Sigmoid colon (tissue), 7 donors: ENCODE measurements at regions of chr5 and their contacts with region 1.

Region 1: DNA sequence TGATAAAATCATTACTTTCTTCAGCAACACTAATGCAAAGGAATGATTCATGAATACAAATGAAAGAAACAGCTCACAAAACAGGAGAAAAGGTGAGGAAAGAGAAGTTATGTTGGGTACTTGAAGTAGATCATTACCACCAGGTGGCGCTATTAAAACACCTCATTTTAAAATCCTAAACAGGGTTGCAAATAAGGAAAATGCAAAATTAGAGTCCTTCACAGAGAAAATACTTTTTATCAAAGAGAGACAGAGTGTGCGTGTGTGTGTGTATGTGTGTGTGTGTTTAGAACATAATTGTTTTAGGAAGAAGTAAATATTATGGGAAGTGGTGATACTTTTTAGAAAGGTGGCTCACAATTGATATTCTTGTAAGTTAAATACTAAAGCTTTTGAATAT is 49.5 kb upstream of the CD180 start:
- DNase-seq: no peak
- H3K4me3 ChIP-seq: no peak overlapping the region
- H3K27ac ChIP-seq: peak overlapping the region; percentile 51 to 72 (median 64)
- H3K4me1 ChIP-seq: peaks cover 0 to 79% (median 68%) of the 10 kb centered on the region in 4 donors
- H3K27me3 ChIP-seq: no peaks in the 10 kb centered on the region
- CTCF ChIP-seq: peak; percentile 69 to 88 (median 76)
- EP300 ChIP-seq: no peak
- POLR2A ChIP-seq: no peak

Region 2: DNA sequence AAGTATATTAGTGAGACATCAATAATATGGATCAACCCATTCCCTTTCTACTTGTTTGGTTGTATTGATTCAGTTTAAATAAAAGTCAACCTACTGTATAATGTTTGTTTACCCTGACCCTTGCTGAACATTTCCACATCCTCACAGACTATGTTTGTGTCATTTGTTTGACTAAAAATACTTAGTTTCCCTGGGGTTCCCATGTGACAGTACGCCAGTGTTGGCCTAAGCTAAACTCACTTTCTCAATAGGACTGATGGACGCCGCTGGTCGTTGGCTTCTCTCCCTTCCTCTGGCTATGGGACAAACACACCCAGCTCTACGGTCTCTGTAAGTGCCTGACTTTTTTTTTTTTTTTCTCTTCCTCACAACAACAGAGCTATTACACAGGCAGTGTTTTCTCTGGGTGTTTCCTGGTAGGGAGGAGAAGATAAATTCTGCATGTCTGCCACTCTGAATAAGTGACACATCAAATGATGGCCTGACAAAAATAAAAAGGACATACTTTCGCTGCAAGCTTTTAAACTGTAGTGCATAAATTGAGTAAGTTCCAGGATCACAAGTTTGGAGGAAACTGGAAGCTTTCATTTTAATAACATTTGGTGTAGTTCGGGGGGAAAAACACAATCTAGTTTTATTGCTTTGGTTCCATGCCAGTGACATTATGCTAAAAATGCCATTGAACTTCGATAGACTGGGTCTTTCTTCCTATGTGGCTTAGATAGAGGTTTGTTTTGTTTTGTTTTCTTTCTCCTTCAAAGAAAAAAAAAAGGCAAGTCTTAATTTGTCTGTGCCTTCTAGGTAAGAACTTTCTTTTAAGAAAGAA is 150.5 kb before region 1 on chr5:
- intact Hi-C with region 1: no loop called
- DNase-seq: peak; percentile 90
- H3K4me3 ChIP-seq: peak overlapping the region in 2 of 4 donors; percentile 11 to 23
- H3K27ac ChIP-seq: peak overlapping the region; percentile 51 to 67 (median 61)
- H3K4me1 ChIP-seq: peaks cover 0 to 61% (median 30%) of the 10 kb centered on the region in 4 donors
- H3K27me3 ChIP-seq: no peaks in the 10 kb centered on the region
- CTCF ChIP-seq: no peak
- EP300 ChIP-seq: no peak
- POLR2A ChIP-seq: no peak

Region 3: DNA sequence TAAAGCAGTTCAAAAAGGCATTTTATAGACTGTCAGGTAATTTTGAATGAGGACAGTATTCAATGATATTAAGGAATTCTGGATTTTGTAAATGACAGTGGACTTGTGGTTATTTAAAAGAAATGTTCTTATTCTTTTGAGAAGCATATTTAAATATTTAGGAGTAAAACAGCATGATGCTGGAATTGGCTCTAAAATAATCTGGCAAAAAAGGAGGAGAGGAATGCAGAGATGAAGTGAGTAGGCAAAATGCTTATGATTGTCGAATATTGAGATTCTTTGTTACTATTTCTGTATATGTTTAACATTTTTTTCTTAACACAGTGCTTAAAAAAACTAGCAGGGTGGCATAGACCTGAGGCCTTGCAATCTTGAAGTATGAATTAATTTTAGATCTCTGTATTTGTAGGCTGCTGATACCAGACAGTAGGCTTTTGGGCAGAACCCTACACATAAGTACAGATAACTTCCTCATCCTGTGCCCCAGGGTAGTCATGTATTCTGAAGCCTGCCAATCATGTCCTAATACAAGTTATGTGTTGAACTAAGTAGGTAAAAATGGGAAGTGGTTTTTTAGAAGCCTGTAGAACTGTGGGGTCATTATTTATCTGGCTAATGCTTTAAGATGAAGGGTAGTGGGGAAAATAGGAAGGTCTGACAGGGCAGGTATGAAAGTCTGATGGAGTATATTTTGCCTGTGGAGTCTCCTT is 58.9 kb before region 1 on chr5:
- intact Hi-C with region 1: no loop called
- DNase-seq: no peak
- H3K4me3 ChIP-seq: no peak overlapping the region
- H3K27ac ChIP-seq: no peak overlapping the region
- H3K4me1 ChIP-seq: peaks cover 0 to 5% (median 0%) of the 10 kb centered on the region in 4 donors
- H3K27me3 ChIP-seq: no peaks in the 10 kb centered on the region
- CTCF ChIP-seq: no peak
- EP300 ChIP-seq: no peak
- POLR2A ChIP-seq: no peak

Region 4: DNA sequence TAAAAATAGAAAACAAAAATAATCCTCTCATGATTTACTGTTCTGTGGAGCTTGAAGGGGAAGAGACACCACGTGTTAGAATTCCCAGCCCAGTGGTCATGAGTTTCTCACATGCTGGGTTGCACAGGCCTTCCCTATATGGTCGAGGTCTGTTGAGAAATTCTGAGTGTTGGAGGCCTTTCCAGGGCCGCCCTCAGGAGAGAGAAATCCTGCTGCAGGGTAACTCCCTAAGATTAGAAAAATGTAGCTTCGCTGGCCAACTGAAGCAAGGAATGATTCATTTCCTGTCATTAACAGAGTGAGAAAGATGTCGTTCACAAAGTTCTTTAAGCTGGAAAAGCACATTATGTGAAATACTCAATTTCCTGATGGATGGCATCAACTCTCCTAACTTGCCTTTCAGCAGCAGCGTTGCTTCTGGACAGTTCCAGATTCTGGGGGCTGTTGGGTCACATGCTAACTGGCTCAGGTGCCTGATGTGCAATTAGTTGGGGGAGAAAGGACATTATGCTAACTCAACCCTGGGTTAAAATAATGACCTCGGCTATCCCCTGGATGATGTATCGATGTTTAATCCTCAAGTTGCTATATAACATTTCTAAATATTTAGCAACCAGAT is 55.3 kb after region 1 on chr5:
- intact Hi-C with region 1: loop called (anchors 2 kb)
- DNase-seq: peak; percentile 92
- H3K4me3 ChIP-seq: no peak overlapping the region
- H3K27ac ChIP-seq: peak overlapping the region; percentile 45 to 78 (median 62)
- H3K4me1 ChIP-seq: peaks cover 0 to 59% (median 36%) of the 10 kb centered on the region in 4 donors
- H3K27me3 ChIP-seq: no peaks in the 10 kb centered on the region
- CTCF ChIP-seq: no peak
- EP300 ChIP-seq: peak in 2 of 4 donors; percentile 18 to 74
- POLR2A ChIP-seq: no peak

Region 5: DNA sequence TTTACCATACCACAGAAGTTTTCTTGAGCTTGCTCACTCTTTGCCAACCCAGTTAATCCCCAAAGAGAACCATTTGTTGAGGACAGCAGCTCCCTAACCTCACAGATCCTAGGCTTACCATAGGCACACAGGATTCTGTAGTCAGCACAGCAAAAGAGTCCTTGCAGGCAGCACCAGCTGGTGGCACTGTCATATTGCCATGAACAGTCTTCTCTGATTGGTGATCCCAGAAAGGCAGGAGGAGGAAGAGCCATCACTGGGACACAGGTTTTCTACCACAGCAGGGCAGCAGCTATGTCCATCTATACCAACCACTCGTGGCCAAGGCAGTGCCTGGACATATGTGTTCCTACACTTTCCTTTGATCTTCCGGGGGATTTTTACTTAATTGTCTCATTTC is 247.6 kb after region 1 on chr5:
- intact Hi-C with region 1: loop called (anchors 10 kb)
- DNase-seq: no peak
- H3K4me3 ChIP-seq: no peak overlapping the region
- H3K27ac ChIP-seq: peak overlapping the region; percentile 50 to 79 (median 62)
- H3K4me1 ChIP-seq: peaks cover 0 to 47% (median 40%) of the 10 kb centered on the region in 4 donors
- H3K27me3 ChIP-seq: no peaks in the 10 kb centered on the region
- CTCF ChIP-seq: peak in 1 of 4 experiments; percentile 9
- EP300 ChIP-seq: no peak
- POLR2A ChIP-seq: no peak

Region 6: DNA sequence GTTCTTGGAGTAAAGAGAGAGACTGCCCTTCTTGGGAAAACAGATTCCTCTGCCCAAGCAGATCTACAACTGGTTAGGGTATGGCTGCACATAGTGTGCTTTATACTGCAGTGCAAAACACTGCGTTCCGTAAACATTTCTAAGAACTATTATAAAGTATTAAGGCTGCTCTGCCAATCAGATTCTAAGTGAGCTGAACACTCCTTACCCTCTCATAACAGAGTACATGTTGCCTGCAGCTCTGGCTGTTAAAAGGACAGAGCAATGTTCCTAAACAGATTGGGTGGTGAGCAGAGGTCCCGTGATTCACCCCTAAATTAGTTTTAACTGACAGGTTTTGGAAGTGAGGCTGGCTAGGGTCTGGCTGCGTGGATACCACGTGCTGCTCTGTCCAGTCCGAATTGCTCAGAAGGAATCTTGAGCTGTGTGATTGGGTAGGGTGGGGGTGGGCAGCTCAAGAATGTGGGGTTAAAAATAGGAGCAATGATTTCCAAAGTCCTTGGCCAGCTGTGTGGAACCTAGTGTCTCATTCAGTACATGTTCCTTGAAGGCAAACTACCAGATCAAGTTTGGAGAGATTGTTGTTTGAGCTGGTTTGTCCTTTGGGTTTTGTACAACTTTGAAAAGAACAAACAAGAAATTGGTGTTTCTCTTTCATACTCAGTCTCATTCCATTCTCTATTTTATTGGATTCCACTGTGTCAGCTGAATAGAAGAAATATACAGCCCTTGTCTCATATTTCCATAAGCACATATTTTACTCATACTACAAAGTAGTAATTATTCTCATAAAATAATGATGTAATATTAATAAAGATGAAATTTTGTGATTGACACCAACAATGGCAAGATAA is 448.1 kb after region 1 on chr5:
- intact Hi-C with region 1: loop called (anchors 5 kb)
- DNase-seq: peak; percentile 97
- H3K4me3 ChIP-seq: no peak overlapping the region
- H3K27ac ChIP-seq: peak overlapping the region; percentile 83 to 89 (median 86)
- H3K4me1 ChIP-seq: peaks cover 0 to 37% (median 29%) of the 10 kb centered on the region in 4 donors
- H3K27me3 ChIP-seq: no peaks in the 10 kb centered on the region
- CTCF ChIP-seq: no peak
- EP300 ChIP-seq: peak; percentile 90 to 100 (median 98)
- POLR2A ChIP-seq: no peak

Region 7: DNA sequence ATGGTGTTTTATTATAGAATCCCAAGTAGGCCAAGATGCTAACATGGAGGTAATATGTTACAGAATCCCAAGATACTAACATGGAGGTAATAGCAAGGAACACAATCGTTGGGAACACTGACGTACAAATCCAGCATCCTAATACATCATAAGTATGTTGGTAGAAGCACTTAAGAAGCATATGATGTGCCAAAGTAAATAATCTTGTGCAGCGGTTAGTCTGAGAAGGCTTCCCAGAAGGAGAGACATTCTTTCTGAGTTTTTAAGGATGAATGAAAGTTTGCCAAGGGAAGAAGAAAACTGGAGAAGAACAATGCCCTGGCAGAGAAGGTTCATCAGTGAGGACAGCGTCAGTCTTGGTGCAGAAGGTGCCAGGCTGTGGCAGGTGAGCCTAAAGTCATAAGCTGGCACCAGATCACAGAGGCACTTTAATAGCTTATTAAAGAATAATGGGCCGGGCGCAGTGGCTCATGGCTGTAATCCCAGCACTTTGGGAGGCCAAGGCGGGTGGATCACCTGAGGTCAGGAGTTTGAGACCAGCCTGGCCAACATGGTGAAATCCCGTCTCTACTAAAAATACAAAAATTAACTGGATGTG is 675.0 kb after region 1 on chr5:
- intact Hi-C with region 1: loop called (anchors 10 kb)
- DNase-seq: peak; percentile 77
- H3K4me3 ChIP-seq: no peak overlapping the region
- H3K27ac ChIP-seq: peak overlapping the region in 3 of 4 donors; percentile 41 to 69 (median 50)
- H3K4me1 ChIP-seq: peaks cover 0 to 4% (median 0%) of the 10 kb centered on the region in 4 donors
- H3K27me3 ChIP-seq: no peaks in the 10 kb centered on the region
- CTCF ChIP-seq: no peak
- EP300 ChIP-seq: peak; percentile 52 to 95 (median 75)
- POLR2A ChIP-seq: no peak

Region 8: DNA sequence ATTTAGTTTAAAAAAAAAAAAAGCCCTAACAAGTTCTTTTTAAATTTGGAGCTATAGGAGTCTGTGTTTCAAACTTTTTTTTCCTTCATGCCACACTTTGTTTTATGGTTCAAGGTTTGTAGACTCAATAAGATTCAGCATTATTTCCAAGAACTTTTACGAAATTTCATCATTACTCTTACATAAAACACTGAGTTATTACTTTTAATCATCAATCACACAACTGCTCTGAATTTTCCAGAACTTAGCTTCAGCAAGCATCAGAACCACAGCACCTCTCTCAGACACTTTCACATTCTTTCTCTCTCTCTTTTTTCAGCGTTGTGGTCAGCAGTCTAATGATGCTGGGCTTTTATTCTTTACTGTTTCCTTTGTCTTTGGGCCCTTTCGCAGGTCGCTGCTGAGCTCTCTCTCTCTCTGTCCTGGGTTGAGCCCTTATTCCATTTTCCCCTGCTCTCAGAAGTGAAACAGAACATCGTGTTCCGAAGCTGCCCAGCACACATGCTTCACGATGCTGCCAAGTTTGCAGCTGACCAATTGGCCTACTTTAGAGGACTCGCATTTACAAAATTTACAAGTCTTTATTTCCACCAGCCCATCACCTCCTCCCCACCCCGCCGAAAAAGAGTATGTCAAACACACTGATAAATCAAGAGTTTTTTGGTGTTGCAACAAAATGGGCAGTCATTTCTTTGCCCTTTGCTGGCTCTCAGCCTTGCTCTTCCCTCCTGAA is 924.9 kb after region 1 on chr5:
- intact Hi-C with region 1: loop called (anchors 5 kb)
- DNase-seq: peak; percentile 98
- H3K4me3 ChIP-seq: peak overlapping the region in 1 of 4 donors; percentile 14
- H3K27ac ChIP-seq: peak overlapping the region; percentile 77 to 89 (median 87)
- H3K4me1 ChIP-seq: peaks cover 0 to 37% (median 36%) of the 10 kb centered on the region in 4 donors
- H3K27me3 ChIP-seq: no peaks in the 10 kb centered on the region
- CTCF ChIP-seq: no peak
- EP300 ChIP-seq: peak; percentile 98 to 99 (median 98)
- POLR2A ChIP-seq: no peak

Region 9: GRCh38 chr5:68252673-68253623 is 1006.8 kb after region 1 on chr5:
- intact Hi-C with region 1: loop called (anchors 2 kb)
- DNase-seq: peak; percentile 82
- H3K4me3 ChIP-seq: peak overlapping the region in 3 of 4 donors; percentile 26 to 33 (median 26)
- H3K27ac ChIP-seq: peak overlapping the region; percentile 67 to 83 (median 80)
- H3K4me1 ChIP-seq: peaks cover 0 to 100% (median 99%) of the 10 kb centered on the region in 4 donors
- H3K27me3 ChIP-seq: no peaks in the 10 kb centered on the region
- CTCF ChIP-seq: peak in 3 of 4 experiments; percentile 64 to 73 (median 73)
- EP300 ChIP-seq: peak in 1 of 4 donors; percentile 4
- POLR2A ChIP-seq: no peak